Panc1 (cell line): ENCODE measurements at regions of chr6 and their contacts with region 1.

Region 1: GRCh38 chr6:166156942-166157341 is 10.7 kb downstream of the TBXT start:
- DNase-seq: no peak
- ATAC-seq: peak; percentile 78
- H3K4me3 ChIP-seq: no peak overlapping the region
- H3K27ac ChIP-seq: no peak overlapping the region
- H3K4me1 ChIP-seq: no peaks in the 10 kb centered on the region
- H3K27me3 ChIP-seq: peaks cover 2% of the 10 kb centered on the region
- CTCF ChIP-seq: peak; percentile 67

Region 2: DNA sequence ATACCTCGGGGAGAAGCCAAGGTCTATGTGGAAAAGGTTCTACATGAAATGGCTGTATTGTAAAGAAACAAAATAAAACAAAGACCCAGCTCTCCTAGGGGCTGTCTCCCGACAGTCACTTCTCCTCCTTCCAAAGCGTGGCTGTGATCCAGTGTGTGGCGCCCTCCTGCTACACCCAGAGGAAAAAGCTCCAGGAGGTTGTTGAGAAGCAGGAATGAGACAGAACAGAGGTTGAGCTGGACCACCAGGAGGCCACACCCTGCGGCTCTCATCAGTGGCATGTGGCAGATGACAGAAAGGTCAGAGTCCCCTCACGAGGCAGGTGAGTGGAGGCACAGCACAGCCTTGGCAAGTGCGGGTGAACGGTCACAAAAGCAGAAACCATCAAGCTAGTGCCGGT is 225.3 kb before region 1 on chr6:
- CTCF ChIA-PET with region 1: no interaction called
- POLR2A ChIA-PET with region 1: no interaction called
- in situ Hi-C with region 1: no loop called
- intact Hi-C with region 1: no loop called
- DNase-seq: no peak
- ATAC-seq: no peak
- H3K4me3 ChIP-seq: no peak overlapping the region
- H3K27ac ChIP-seq: no peak overlapping the region
- H3K4me1 ChIP-seq: no peaks in the 10 kb centered on the region
- H3K27me3 ChIP-seq: peaks cover 8% of the 10 kb centered on the region; the same call in 1 of the 2 replicates
- CTCF ChIP-seq: no peak

Region 3: GRCh38 chr6:166402582-166403277 is 245.8 kb after region 1 on chr6:
- CTCF ChIA-PET with region 1: interaction called, 5 read pairs
- POLR2A ChIA-PET with region 1: no interaction called
- in situ Hi-C with region 1: no loop called
- intact Hi-C with region 1: loop called (anchors 5 kb)
- DNase-seq: no peak
- ATAC-seq: no peak
- H3K4me3 ChIP-seq: no peak overlapping the region
- H3K27ac ChIP-seq: no peak overlapping the region
- H3K4me1 ChIP-seq: no peaks in the 10 kb centered on the region
- H3K27me3 ChIP-seq: no peaks in the 10 kb centered on the region
- CTCF ChIP-seq: no peak

Region 4: DNA sequence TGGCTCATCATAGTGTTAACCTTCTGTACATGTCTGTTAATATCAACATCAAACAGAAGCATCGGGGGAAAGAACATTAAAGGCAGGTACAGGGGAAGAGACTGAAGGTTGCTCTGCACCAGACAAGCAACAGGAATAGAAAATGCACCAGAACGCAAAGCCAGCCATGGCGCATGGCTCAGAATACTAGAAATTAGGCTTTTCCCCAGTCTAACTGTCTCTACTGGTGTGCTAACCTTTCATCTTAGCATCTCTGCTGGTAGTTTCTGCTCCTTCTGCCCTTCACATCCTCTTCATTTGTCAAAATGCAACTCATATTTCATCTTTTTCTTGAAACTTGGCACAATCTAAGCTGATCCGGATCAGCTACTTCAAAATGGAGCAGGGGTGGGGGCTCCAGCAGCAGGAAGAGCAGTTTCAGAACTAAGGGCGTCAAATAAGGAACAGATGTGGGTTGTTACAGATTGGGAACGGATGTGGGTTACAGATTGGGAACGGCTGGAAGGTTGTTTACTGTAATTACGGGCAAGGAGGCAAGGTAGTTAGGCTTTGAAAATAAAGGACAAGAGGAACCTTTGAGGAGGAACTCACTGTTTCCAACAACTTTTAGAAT is 812.6 kb after region 1 on chr6:
- CTCF ChIA-PET with region 1: no interaction called
- POLR2A ChIA-PET with region 1: no interaction called
- in situ Hi-C with region 1: no loop called
- intact Hi-C with region 1: no loop called
- DNase-seq: no peak
- ATAC-seq: no peak
- H3K4me3 ChIP-seq: no peak overlapping the region
- H3K27ac ChIP-seq: no peak overlapping the region
- H3K4me1 ChIP-seq: no peaks in the 10 kb centered on the region
- H3K27me3 ChIP-seq: no peaks in the 10 kb centered on the region
- CTCF ChIP-seq: no peak